Activated naive CD8-positive, alpha-beta T cell treated with anti-CD3 and anti-CD28 coated beads, Interleukin-2, amount 10 ng/mL, durations not matched to agents 7 days and 5 days (primary cell): ENCODE measurements at regions of chr12 and their contacts with region 1.

Region 1: DNA sequence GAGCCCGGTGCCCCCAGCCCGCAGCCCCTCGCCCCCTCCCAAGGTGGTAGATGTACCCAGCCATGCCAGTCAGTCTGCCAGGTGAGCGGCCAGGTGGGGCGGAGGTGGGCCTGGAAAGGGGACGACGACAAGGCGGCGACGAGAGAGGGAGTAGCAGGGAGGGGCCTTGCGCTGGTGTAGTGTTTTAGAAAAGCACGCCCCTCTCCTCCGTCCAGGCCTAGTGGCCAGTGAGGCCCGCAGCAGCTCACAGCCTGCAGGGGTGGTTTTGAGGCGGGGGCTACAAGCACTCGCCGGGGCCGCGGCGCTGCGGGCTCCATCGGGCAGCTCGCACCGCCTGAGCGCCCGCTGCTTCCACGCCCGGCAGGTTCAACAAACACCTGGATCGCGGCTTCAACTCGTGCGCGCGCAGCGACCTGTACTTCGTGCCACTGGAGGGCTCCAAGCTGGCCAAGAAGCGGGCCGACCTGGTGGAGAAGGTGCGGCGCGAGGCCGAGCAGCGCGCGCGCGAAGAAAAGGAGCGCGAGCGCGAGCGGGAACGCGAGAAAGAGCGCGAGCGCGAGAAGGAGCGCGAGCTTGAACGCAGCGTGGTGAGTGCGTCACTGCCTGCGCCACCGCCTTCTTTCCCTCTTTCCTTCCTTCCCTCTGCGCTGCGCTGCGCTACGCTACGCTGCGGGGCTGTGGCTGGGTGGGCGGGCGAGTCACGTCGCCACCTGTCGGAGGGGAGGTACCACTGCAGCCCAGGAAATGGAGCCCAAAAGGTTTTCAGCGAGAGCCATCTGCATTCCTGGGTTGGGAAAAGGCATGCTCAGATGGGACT is 5.9 kb upstream of the RNU7-1 start:
- DNase-seq: peak; percentile 90
- ATAC-seq: peak; percentile 92
- H3K4me3 Mint-ChIP-seq: peak overlapping the region; percentile 95
- H3K27ac Mint-ChIP-seq: peak overlapping the region; percentile 99
- H3K4me1 Mint-ChIP-seq: peaks cover 44% of the 10 kb centered on the region
- H3K27me3 Mint-ChIP-seq: no peaks in the 10 kb centered on the region

Region 2: DNA sequence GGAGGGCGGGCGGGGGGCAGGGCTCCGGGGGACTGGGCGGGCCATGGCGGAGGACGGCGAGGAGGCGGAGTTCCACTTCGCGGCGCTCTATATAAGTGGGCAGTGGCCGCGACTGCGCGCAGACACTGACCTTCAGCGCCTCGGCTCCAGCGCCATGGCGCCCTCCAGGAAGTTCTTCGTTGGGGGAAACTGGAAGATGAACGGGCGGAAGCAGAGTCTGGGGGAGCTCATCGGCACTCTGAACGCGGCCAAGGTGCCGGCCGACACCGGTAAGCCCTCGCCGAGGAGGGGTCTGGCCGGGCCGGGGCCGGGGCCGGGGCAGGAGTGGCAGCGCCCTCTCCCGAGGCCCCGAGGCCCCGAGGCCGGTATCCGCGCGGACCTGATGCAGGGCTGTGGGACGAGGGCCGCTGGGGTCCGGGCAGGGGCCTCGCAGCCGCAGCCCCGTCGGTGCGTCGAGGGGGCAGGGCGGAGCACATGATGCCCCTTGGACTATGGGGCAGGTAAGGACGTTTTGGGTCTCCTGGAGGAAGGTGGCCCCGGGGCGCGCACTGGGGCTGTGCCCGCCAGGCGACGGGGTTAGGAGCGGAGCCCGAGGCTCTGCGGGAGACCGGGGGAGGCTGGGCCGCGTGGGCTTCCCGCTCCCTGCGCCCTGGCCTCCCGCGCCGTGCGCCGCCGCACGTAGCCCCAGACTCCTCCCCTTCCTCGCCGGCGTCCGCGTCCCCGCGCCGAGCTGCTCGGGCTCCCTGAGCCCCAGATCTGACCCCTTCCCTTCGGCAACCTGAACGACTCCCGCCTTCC is 70.1 kb before region 1 on chr12 and contains the start of gene TPI1:
- POLR2A ChIA-PET with region 1: interaction called, 40 read pairs
- DNase-seq: peak; percentile 85
- ATAC-seq: peak; percentile 65
- H3K4me3 Mint-ChIP-seq: peak within 1 kb of the TSS; percentile 95
- H3K27ac Mint-ChIP-seq: peak within 1 kb of the TSS; percentile 96
- H3K4me1 Mint-ChIP-seq: peaks cover 39% of the 10 kb centered on the region
- H3K27me3 Mint-ChIP-seq: no peaks in the 10 kb centered on the region
- total RNA-seq, gene TPI1: 1,129 to 1,200 TPM

Region 3: GRCh38 chr12:6890789-6891645 is 46.7 kb before region 1 on chr12:
- POLR2A ChIA-PET with region 1: interaction called, 10 read pairs
- DNase-seq: peak; percentile 100
- ATAC-seq: peak; percentile 97
- H3K4me3 Mint-ChIP-seq: peak overlapping the region; percentile 88
- H3K27ac Mint-ChIP-seq: peak overlapping the region; percentile 91
- H3K4me1 Mint-ChIP-seq: peaks cover 17% of the 10 kb centered on the region
- H3K27me3 Mint-ChIP-seq: no peaks in the 10 kb centered on the region

Region 4: GRCh38 chr12:6927379-6928024 is 10.2 kb before region 1 on chr12 and contains the start of gene ATN1:
- POLR2A ChIA-PET with region 1: interaction called, 64 read pairs
- DNase-seq: peak; percentile 68
- ATAC-seq: peak; percentile 23
- H3K4me3 Mint-ChIP-seq: peak within 1 kb of the TSS; percentile 82
- H3K27ac Mint-ChIP-seq: peak within 1 kb of the TSS; percentile 80
- H3K4me1 Mint-ChIP-seq: peaks cover 47% of the 10 kb centered on the region
- H3K27me3 Mint-ChIP-seq: no peaks in the 10 kb centered on the region
- total RNA-seq, gene ATN1: 31.0 to 31.3 TPM

Region 5: GRCh38 chr12:6965026-6965661 is 27.5 kb after region 1 on chr12:
- POLR2A ChIA-PET with region 1: interaction called, 1,055 read pairs
- DNase-seq: peak; percentile 85
- ATAC-seq: peak; percentile 61
- H3K4me3 Mint-ChIP-seq: no peak overlapping the region
- H3K27ac Mint-ChIP-seq: peak overlapping the region; percentile 51
- H3K4me1 Mint-ChIP-seq: peaks cover 46% of the 10 kb centered on the region
- H3K27me3 Mint-ChIP-seq: no peaks in the 10 kb centered on the region